Psoas muscle (tissue), 8 donors: ENCODE measurements at regions of chr1 and their contacts with region 1.

Region 1: DNA sequence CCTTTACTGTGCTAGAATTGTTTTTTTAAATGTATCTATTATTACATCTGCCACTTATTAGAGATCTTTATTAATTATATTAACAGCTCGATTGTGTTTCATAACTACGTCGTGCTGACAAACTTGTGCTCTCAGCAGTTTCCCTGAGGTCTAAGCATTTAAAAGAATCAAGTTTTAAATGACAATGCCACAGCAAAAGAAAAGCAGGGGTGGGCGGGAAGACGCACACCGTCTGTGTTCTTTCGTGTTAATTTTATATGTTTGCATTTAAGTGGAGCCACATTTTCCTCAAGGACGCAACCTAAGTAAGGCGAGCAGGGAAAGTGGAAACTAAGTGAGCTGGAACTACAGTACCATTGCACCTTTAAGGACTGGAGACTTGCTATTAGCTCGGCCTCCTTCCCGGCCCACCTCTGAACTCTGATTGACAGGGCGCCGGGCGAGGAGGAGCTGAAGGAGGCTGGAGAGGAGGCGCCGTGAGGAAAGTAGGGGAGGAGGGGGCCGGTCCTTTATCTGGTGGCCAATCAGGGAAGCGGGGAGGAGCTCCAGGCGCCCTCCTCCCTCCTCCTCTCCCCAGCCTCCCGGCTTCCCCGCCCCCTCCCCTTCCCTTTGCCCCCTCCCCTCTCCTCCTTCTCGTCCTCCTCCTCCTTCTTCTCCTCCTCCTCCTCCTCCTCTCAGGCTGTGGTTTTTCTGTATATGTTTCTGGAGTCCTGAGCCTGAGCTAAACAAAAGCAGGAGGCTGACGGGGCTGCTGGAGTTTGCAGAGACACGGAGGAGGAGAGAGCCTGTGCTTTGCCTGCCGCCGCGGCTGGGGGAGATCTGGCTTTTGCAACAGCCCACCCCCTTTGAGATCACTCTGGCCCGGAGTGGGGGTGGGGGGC is at the start of gene PBX1:
- DNase-seq: peak; percentile 97 to 98
- ATAC-seq: peak; percentile 96 to 100 (median 98)
- H3K4me3 ChIP-seq: peak within 1 kb of the TSS; percentile 85
- H3K27ac ChIP-seq: peak within 1 kb of the TSS; percentile 74
- H3K4me1 ChIP-seq: peaks cover 10% of the 10 kb centered on the region
- H3K27me3 ChIP-seq: no peaks in the 10 kb centered on the region
- CTCF ChIP-seq: no peak
- total RNA-seq, gene PBX1: 59.3 to 69.9 (median 64.4) TPM

Region 2: DNA sequence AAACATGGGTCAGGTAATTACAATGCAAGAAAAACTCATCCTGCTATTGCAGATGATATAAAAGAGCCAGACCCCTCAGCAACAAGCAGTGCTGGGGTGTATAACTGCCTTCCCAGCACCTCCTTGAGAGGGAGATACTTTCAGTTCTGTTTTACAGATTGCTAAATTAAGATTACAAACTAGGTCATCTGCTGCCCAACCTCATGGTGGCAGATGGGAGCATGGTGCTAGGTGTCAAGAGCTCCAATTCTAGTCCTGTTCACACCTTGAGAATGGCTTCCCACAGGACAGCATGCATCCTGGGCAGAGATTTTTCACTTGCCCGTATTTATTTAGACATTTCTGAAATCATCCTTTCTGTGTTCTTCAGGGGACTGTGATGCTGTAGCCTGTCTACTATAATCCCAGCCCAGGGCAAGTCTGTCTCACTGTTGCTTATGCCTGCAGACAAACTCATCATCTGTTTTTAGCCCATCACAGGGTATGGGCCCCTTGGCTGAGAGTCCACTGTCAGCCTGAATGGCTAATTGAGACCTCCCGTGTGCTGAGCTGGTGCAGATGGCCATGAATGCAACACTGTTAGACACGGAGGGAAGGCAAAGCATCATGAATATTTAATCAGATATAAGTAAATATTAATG is 39.9 kb before region 1 on chr1:
- intact Hi-C with region 1: loop called in 1 of 2 experiments (anchors 5 kb)
- DNase-seq: no peak
- ATAC-seq: no peak
- H3K4me3 ChIP-seq: no peak overlapping the region
- H3K27ac ChIP-seq: no peak overlapping the region
- H3K4me1 ChIP-seq: peaks cover 12% of the 10 kb centered on the region
- H3K27me3 ChIP-seq: no peaks in the 10 kb centered on the region
- CTCF ChIP-seq: no peak

Region 3: DNA sequence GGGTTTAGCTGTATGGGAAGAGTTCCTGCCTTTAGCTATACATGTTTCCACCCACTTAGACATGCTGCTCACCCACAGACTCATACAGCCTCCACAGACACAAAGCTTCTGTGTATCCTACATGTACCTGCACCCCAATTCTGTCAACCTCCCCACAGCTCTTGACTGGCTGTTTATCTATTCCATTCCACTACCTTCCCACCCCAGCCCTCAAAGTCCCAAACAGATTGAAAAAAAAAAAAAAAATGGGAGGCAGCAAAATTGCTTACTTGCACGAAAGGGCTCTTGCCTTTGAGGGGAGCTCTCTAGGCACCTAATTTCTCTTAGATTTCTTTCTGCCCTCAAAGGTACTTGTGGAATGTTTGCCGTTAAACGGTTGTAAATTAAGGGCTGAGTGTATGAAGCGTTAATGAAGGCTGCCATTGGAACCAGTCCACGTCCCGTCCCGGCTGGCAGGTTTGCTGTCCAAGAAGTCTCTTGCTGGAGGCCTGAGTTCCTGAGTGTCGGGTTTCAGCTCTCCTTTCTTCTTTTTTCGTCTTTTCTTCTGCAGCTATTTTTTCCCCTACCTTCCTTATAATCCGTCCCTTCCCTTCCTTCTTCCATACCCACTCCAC is 43.9 kb after region 1 on chr1:
- intact Hi-C with region 1: loop called in 1 of 2 experiments (anchors 5 kb)
- DNase-seq: peak; percentile 35 to 73
- ATAC-seq: peak; percentile 39 to 82 (median 61)
- H3K4me3 ChIP-seq: peak overlapping the region; percentile 14
- H3K27ac ChIP-seq: peak overlapping the region; percentile 55
- H3K4me1 ChIP-seq: peaks cover 37% of the 10 kb centered on the region
- H3K27me3 ChIP-seq: no peaks in the 10 kb centered on the region
- CTCF ChIP-seq: no peak

Region 4: DNA sequence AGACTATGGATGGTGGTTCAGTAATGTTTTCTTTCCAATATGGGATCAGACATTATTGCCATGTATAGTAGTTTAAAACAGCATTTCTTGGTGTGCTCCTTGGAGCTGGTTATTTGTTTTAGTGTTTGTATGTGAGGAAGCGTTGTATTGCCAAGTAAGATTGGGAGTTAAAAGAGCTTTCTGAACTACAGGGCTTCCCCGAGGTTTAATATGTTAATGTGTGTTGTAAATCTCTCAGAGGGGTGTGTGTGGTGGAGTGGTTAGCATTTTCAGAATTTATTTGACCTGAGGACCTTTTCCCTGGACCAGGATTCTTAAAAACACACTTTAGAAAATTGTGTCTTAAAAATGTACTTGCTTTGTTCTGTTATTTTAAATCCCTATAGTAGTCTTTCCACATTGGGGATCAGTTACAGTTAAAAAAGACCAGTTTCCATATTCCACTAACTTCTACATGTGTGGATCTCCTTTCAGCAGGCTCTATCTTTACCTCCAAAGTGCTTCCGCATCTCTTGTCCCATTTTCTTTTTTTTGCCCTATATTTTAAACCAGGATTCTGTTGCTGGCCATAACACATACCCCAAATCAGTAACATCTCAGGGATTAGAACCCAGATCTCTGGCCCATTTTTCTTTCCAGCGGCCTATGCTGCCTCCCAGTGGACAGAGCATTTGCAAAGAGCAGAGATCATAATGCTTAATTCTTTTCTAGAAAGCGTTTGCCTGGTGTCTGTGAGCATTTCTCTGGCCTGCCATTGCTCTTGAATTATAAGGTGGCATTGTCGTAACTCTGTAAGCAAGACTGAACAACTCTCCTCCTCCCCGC is 58.9 kb after region 1 on chr1:
- intact Hi-C with region 1: loop called in 1 of 2 experiments (anchors 5 kb)
- DNase-seq: no peak
- ATAC-seq: no peak
- H3K4me3 ChIP-seq: no peak overlapping the region
- H3K27ac ChIP-seq: no peak overlapping the region
- H3K4me1 ChIP-seq: peaks cover 65% of the 10 kb centered on the region
- H3K27me3 ChIP-seq: no peaks in the 10 kb centered on the region
- CTCF ChIP-seq: peak; percentile 42

Region 5: GRCh38 chr1:164780863-164781262 is 222.2 kb after region 1 on chr1:
- intact Hi-C with region 1: loop called in 1 of 2 experiments (anchors 5 kb)
- DNase-seq: peak; percentile 58 to 82
- ATAC-seq: peak; percentile 88 to 97 (median 96)
- H3K4me3 ChIP-seq: no peak overlapping the region
- H3K27ac ChIP-seq: peak overlapping the region; percentile 84
- H3K4me1 ChIP-seq: peaks cover 48% of the 10 kb centered on the region
- H3K27me3 ChIP-seq: no peaks in the 10 kb centered on the region
- CTCF ChIP-seq: no peak